OCI-LY7 (cell line): ENCODE measurements at regions of chr5 and their contacts with region 1.

Region 1: GRCh38 chr5:671459-672328 is 21.5 kb downstream of the TPPP start:
- DNase-seq: peak; percentile 49
- H3K4me3 ChIP-seq: no peak overlapping the region
- H3K27ac ChIP-seq: no peak overlapping the region
- H3K4me1 ChIP-seq: no peaks in the 10 kb centered on the region
- CTCF ChIP-seq: peak; percentile 70

Region 2: GRCh38 chr5:902129-902916 is 230.6 kb after region 1 on chr5:
- CTCF ChIA-PET with region 1: no interaction called
- POLR2A ChIA-PET with region 1: no interaction called
- intact Hi-C with region 1: loop called (anchors 5 kb)
- DNase-seq: no peak
- H3K4me3 ChIP-seq: no peak overlapping the region
- H3K27ac ChIP-seq: no peak overlapping the region
- H3K4me1 ChIP-seq: no peaks in the 10 kb centered on the region
- CTCF ChIP-seq: no peak